Activated CD4-positive, alpha-beta T cell treated with anti-CD3 and anti-CD28 coated beads for 36 hours (primary cell): ENCODE measurements at regions of chr1 and their contacts with region 1.

Region 1: GRCh38 chr1:92485381-92486257 is 1.1 kb downstream of the GFI1 start:
- DNase-seq: peak; percentile 95
- ATAC-seq: peak; percentile 58
- H3K4me3 Mint-ChIP-seq: peak overlapping the region; percentile 98
- H3K27ac Mint-ChIP-seq: peak overlapping the region; percentile 97
- H3K4me1 Mint-ChIP-seq: peaks cover 30% of the 10 kb centered on the region
- H3K27me3 Mint-ChIP-seq: no peaks in the 10 kb centered on the region

Region 2: DNA sequence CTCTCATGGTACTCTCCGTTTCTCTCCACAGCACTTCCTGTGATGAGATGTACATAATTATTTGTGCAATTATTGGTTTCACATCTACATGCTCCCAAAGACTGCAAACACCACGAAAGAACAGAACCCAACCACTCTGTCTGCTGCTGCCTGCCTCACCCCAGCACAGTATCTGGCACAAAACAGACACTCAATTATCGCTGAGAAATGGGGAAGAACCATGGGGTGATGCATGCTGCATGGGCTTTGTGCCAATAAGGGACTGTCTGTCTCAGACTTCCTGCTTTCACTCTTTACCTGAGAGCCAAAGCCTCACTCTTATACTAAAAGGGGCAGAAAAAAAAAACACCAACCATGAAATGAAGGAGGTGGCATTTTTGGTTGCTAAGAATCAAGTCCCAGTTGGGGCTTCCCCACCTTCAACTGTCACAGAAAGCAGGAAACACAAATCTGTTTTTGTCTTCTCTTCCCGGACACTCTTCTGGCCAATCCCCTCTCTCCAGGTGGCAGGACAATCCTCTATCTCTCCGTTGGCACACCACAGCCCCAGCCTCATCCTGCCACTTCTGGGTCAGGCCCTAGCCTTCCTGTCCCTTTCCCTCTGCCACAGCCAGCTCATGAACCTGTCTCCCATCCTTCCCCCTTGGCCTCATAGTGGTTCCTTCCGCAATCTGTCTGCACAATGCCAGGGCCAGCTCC is 681.6 kb before region 1 on chr1:
- CTCF ChIA-PET with region 1: no interaction called
- POLR2A ChIA-PET with region 1: no interaction called
- intact Hi-C with region 1: loop called in 1 of 2 experiments (anchors 5 kb)
- DNase-seq: peak; percentile 86
- ATAC-seq: peak; percentile 80
- H3K4me3 Mint-ChIP-seq: peak overlapping the region; percentile 56
- H3K27ac Mint-ChIP-seq: peak overlapping the region; percentile 90
- H3K4me1 Mint-ChIP-seq: peaks cover 39% of the 10 kb centered on the region
- H3K27me3 Mint-ChIP-seq: peaks cover 1% of the 10 kb centered on the region

Region 3: DNA sequence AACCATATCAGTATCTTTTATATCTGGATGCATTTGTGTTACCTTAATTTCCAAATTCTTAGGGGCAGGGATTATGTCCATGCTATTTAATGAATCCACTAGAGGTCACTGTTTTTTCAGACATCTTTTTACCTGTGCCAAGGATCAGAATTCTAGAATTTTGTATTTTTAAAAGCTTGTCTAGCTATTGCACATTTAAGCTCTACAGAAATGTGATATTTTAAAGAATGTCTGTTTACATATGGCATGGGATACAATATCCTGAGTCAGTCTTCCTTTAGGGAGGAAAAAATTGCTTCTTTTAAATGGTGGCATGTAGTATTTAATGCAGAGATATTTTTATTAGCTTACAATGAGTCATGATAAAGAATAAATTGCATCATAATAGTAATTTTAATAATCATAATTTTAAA is 175.4 kb before region 1 on chr1:
- CTCF ChIA-PET with region 1: interaction called, 6 read pairs
- POLR2A ChIA-PET with region 1: interaction called, 3 read pairs
- intact Hi-C with region 1: loop called (anchors 2 to 5 kb)
- DNase-seq: no peak
- ATAC-seq: peak; percentile 34
- H3K4me3 Mint-ChIP-seq: no peak overlapping the region
- H3K27ac Mint-ChIP-seq: no peak overlapping the region
- H3K4me1 Mint-ChIP-seq: peaks cover 33% of the 10 kb centered on the region
- H3K27me3 Mint-ChIP-seq: no peaks in the 10 kb centered on the region

Region 4: GRCh38 chr1:92502247-92502646 is 16.6 kb after region 1 on chr1:
- CTCF ChIA-PET with region 1: interaction called, 6 read pairs
- POLR2A ChIA-PET with region 1: no interaction called
- intact Hi-C with region 1: loop called (anchors 1 to 2 kb)
- DNase-seq: no peak
- ATAC-seq: peak; percentile 65
- H3K4me3 Mint-ChIP-seq: no peak overlapping the region
- H3K27ac Mint-ChIP-seq: peak overlapping the region; percentile 55
- H3K4me1 Mint-ChIP-seq: peaks cover 40% of the 10 kb centered on the region
- H3K27me3 Mint-ChIP-seq: no peaks in the 10 kb centered on the region

Region 5: GRCh38 chr1:92583821-92584760 is 98.5 kb after region 1 on chr1:
- CTCF ChIA-PET with region 1: interaction called, 16 read pairs
- POLR2A ChIA-PET with region 1: interaction called, 9 read pairs
- intact Hi-C with region 1: loop called (anchors 1 kb)
- DNase-seq: no peak
- ATAC-seq: peak; percentile 60
- H3K4me3 Mint-ChIP-seq: peak overlapping the region; percentile 68
- H3K27ac Mint-ChIP-seq: peak overlapping the region; percentile 92
- H3K4me1 Mint-ChIP-seq: peaks cover 79% of the 10 kb centered on the region
- H3K27me3 Mint-ChIP-seq: no peaks in the 10 kb centered on the region

Region 6: DNA sequence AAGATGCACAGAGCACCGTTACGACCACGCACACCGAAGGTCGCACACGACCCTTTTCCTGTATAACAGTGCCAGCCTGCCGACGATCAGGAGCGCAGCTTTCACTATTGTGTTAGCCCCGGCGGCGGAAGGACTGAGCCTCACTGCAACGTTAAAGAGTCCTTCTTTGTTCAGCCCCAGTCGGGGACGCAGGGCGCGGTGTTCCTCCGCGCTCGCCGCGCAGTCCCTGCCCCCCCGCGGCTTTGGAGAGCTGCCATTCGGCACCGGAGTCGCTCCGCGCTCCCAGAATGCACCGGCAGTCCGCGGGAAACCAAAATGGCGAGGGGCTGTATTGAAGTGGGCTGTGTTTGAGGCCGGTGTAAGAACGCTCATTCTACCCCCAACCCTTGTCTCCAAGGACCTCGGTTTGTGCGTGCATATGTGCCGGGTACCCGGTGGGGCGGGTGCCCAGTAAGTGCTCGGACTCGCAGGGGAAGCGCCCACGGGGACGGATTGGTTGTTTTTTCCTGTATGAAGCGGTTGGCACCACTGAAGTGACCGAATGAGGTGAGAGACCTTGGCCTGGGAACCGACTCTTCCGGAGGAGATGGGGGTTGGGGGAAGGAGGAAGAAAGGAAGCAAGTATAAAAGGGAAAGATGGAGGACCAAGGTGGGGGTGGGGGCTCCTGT is 593.5 kb after region 1 on chr1 and contains the start of gene MTF2:
- CTCF ChIA-PET with region 1: no interaction called
- POLR2A ChIA-PET with region 1: no interaction called
- intact Hi-C with region 1: loop called in 1 of 2 experiments (anchors 10 kb)
- DNase-seq: peak; percentile 97
- ATAC-seq: peak; percentile 91
- H3K4me3 Mint-ChIP-seq: peak within 1 kb of the TSS; percentile 94
- H3K27ac Mint-ChIP-seq: peak within 1 kb of the TSS; percentile 94
- H3K4me1 Mint-ChIP-seq: peaks cover 29% of the 10 kb centered on the region
- H3K27me3 Mint-ChIP-seq: no peaks in the 10 kb centered on the region
- total RNA-seq, gene MTF2: 49.8 to 55.0 TPM